Activated CD4-positive, alpha-beta T cell treated with anti-CD3 and anti-CD28 coated beads for 36 hours (primary cell): ENCODE measurements at regions of chr12 and their contacts with region 1.

Region 1: DNA sequence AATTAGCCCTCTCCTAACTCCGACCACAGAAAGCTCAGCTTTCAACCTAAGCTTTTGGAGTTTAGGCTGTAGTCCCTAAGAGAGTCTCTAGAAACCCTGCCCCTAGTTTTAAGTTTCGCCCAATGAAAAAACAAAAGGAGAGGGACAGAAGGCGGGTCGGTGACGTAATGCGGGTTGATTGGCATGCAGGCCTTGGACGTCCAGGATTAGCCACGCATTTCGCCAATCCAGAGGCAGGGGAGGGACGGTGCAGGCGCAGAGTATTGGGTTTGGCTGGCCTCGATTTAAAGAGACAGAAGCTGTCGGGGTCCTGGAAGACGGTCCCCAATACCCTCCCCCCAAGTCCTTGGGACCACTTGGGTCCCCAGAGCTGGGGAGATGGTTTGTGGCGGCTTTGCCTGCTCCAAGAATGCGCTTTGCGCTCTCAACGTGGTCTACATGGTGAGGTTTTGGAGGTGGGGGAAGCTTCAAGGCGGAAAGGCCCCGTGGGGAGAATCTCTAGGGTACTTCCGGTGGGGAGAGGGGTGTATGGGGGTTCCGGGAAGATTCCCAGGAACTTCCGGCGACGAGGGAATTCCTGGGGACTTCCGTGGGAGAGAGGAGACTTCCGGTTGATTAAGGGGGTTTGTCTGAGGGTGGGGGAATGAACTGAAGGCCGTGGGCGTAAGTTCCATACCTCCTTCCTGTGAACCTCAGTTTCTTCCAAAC is at the start of gene TSPAN31:
- DNase-seq: peak; percentile 98
- ATAC-seq: peak; percentile 82
- H3K4me3 Mint-ChIP-seq: peak within 1 kb of the TSS; percentile 94
- H3K27ac Mint-ChIP-seq: peak within 1 kb of the TSS; percentile 98
- H3K4me1 Mint-ChIP-seq: peaks cover 47% of the 10 kb centered on the region
- H3K27me3 Mint-ChIP-seq: no peaks in the 10 kb centered on the region
- total RNA-seq, gene TSPAN31: 13.6 to 15.9 TPM

Region 2: DNA sequence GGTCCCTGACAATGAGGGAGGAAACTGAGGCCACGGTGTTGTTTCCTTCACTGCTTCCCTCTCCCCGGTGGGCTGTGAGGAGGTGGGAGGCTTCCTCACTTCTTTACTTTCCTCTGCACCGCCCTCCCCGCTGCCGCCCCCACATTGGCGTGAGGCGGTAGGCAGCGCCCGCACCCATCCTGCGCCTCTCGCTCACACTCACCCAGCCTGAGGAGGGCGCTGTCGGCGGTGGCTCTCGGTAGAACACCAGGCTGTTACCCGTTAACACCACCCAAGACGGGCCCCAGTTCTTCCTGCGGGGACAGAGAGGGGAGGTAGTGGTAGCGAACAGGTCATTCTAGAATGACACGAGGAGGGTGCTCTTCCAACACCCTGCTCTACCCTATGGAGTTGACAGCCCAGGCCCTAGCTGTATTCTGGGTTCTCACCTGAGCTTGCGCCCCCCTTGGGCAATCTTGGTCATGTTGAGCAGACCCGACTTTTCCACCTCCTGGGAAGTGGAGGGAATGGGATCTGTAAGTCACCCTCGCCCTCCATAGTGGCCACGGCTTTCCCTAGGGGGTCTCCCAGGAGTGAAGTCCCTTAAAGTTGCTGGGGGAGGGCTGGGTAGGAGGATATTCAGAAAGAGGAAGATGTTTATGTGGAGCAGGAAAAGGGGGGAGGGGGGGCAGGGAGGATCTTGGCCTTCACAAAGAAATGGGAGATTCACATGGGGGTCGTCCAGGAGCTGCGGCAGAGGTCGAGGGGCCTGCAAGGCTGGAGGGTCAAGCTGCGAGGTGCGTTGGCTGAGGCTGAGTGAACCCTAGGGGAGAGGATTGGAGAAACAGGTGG is 268.6 kb before region 1 on chr12:
- CTCF ChIA-PET with region 1: no interaction called
- POLR2A ChIA-PET with region 1: no interaction called
- intact Hi-C with region 1: loop called (anchors 5 kb)
- DNase-seq: peak; percentile 96
- ATAC-seq: peak; percentile 71
- H3K4me3 Mint-ChIP-seq: peak overlapping the region; percentile 86
- H3K27ac Mint-ChIP-seq: peak overlapping the region; percentile 99
- H3K4me1 Mint-ChIP-seq: peaks cover 62% of the 10 kb centered on the region
- H3K27me3 Mint-ChIP-seq: no peaks in the 10 kb centered on the region

Region 3: DNA sequence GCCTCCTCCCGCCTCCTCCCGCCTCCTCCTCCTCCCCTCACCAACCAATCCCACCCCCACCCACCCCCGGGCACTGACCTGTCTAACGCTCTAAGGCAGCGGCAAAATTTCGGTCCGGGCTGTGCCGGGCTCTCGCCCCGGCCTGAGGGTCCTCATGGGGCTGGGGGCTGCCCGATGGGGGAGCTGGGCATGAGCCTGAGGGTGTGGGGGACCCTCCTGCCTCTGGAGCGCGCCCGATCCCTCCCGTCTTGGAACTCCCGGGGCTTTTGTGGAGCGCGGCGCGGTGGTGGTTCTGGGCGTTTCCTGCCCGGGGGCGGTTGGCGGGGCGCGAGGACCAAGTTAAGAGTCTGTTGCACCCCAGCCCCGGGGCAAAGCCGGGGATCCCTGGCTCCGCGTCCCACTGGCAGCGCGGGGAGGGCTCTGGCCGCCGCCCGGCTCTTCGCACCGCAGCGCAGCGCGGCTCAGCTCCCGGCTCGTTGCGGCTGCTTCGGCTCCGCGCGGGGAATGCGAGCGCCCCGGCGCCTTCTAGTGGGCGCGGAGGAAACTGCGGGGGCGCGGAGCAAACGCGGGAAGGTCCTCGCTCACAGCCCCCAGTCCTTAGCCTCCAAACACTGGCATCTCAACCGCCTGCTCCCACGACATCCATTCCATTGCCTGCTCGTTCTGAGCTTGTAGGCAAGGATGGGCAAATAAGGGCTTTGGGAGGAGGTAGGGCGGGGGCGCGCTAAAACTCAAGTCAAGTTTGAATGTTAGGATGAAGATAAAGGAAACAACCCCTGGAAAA is 112.0 kb before region 1 on chr12 and contains the start of gene B4GALNT1:
- CTCF ChIA-PET with region 1: no interaction called
- POLR2A ChIA-PET with region 1: no interaction called
- intact Hi-C with region 1: loop called (anchors 1 to 5 kb)
- DNase-seq: peak; percentile 81
- ATAC-seq: peak; percentile 86
- H3K4me3 Mint-ChIP-seq: peak within 1 kb of the TSS; percentile 54
- H3K27ac Mint-ChIP-seq: no peak within 1 kb of the TSS
- H3K4me1 Mint-ChIP-seq: peaks cover 7% of the 10 kb centered on the region
- H3K27me3 Mint-ChIP-seq: peaks cover 49% of the 10 kb centered on the region
- total RNA-seq, gene B4GALNT1: 1.4 to 1.5 TPM

Region 4: DNA sequence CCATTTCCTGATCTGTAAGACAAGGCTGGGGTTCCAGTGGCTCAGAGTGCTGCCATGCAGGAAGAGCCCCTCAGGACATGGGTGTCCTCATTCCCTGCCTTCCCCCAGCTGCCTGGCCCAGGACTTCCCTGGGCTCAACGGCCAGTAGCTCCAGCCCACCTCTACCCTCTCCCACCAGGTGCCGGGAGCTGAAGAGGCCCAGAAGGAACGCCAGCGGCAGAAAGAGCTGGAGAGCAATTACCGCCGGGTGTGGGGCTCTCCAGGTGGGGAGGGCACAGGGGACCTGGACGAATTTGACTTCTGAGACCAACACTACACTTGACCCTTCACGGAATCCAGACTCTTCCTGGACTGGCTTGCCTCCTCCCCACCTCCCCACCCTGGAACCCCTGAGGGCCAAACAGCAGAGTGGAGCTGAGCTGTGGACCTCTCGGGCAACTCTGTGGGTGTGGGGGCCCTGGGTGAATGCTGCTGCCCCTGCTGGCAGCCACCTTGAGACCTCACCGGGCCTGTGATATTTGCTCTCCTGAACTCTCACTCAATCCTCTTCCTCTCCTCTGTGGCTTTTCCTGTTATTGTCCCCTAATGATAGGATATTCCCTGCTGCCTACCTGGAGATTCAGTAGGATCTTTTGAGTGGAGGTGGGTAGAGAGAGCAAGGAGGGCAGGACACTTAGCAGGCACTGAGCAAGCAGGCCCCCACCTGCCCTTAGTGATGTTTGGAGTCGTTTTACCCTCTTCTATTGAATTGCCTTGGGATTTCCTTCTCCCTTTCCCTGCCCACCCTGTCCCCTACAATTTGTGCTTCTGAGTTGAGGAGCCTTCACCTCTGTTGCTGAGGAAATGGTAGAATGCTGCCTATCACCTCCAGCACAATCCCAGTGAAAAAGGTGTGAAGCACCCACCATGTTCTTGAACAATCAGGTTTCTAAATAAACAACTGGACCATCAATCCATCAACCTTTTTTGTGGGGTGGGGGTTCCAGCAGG is 24.0 kb before region 1 on chr12:
- CTCF ChIA-PET with region 1: interaction called, 5 read pairs
- POLR2A ChIA-PET with region 1: no interaction called
- intact Hi-C with region 1: loop called in 1 of 2 experiments (anchors 2 kb)
- DNase-seq: no peak
- ATAC-seq: no peak
- H3K4me3 Mint-ChIP-seq: no peak overlapping the region
- H3K27ac Mint-ChIP-seq: no peak overlapping the region
- H3K4me1 Mint-ChIP-seq: no peaks in the 10 kb centered on the region
- H3K27me3 Mint-ChIP-seq: no peaks in the 10 kb centered on the region